HAP-1 (cell line): ENCODE measurements at regions of chr11 and their contacts with region 1.

Region 1: GRCh38 chr11:128884703-128885338 is 6.3 kb upstream of the KCNJ5 start:
- DNase-seq: peak; percentile 49 to 78
- H3K4me3 ChIP-seq: no peak overlapping the region
- H3K4me1 ChIP-seq: peaks cover 7% of the 10 kb centered on the region
- H3K27me3 ChIP-seq: peaks cover 23% of the 10 kb centered on the region

Region 2: DNA sequence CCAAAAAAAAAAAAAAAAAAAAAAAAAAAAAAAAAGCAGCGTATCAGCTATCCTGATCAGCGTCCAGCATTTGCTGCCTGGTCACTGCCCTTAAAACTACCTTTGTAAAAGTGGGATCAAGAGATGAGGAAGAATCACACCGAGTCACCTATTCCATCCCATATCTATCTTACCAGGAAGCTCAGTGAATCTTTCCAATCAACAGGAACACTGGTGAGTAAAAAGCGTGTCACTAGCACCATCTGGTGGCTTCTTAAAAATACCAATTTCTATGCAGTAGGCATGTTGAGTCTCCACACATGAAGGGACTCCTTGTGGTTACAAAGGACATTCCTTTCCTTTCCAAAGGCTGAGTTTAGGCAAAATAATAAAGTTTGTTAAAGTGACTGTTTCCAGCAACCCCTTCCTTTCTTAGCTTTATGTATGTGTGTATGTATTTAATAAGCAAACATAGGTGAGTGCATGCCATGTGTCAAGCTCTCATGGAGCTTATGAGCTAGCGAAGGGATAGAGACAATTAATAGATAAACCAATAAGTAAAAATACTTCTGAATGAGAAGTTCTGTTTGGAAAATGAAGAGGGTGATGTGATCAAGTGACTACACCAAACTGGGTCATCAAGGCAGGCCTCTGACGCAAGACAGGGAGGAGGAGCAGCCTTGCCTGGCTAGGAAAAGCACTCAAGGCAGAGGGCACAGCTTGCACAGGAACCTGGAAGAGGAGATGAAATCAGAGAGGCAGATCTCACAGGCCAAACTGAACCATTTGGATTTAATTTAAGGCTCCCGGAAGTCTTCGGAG is 71.8 kb after region 1 on chr11:
- in situ Hi-C with region 1: loop called (anchors 5 kb)
- DNase-seq: peak; percentile 68 to 71
- H3K4me3 ChIP-seq: no peak overlapping the region
- H3K4me1 ChIP-seq: no peaks in the 10 kb centered on the region
- H3K27me3 ChIP-seq: peaks cover 9% of the 10 kb centered on the region

Region 3: DNA sequence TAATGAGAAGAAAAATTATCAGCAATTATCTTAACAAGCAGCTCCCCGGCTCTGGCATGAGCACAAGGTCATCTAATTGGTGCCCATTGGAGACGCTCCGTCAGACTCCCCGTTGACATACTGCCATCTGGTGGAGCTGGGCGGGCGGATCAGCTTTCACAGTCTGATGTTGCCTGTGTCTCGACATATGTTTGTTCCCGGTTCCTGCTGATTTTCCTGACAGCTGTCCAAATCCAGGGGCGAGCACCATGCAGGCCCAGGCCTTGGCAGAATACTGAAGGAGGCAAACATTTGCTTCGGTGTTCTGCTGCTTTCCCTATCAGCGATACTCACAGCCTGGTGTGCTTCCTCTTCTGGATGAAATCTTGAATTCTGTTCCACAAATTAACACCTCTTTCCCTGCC is 447.1 kb after region 1 on chr11:
- in situ Hi-C with region 1: loop called (anchors 5 kb)
- DNase-seq: peak; percentile 64 to 88
- H3K4me3 ChIP-seq: no peak overlapping the region
- H3K4me1 ChIP-seq: no peaks in the 10 kb centered on the region
- H3K27me3 ChIP-seq: no peaks in the 10 kb centered on the region

Region 4: GRCh38 chr11:129750349-129751292 is 865.8 kb after region 1 on chr11:
- in situ Hi-C with region 1: loop called (anchors 25 kb)
- DNase-seq: peak; percentile 59 to 83
- H3K4me3 ChIP-seq: no peak overlapping the region
- H3K4me1 ChIP-seq: no peaks in the 10 kb centered on the region; the same call in 1 of the 2 replicates
- H3K27me3 ChIP-seq: no peaks in the 10 kb centered on the region